Right ventricle myocardium inferior (tissue), 1 donor: ENCODE measurements at regions of chr10 and their contacts with region 1.

Region 1: GRCh38 chr10:117216611-117217195 is 19.4 kb downstream of the KCNK18 start:
- DNase-seq: peak; percentile 90
- ATAC-seq: peak; percentile 79

Region 2: GRCh38 chr10:117140525-117140902 is 76.2 kb before region 1 on chr10:
- intact Hi-C with region 1: no loop called
- DNase-seq: no peak
- ATAC-seq: no peak

Region 3: GRCh38 chr10:117318909-117319308 is 102.2 kb after region 1 on chr10:
- intact Hi-C with region 1: loop called (anchors 5 kb)
- DNase-seq: no peak
- ATAC-seq: no peak

Region 4: GRCh38 chr10:117375360-117376178 is 158.9 kb after region 1 on chr10 and contains the start of gene PDZD8:
- intact Hi-C with region 1: loop called (anchors 5 kb)
- DNase-seq: peak; percentile 98
- ATAC-seq: peak; percentile 98
- total RNA-seq, gene PDZD8: 20.0 TPM

Region 5: DNA sequence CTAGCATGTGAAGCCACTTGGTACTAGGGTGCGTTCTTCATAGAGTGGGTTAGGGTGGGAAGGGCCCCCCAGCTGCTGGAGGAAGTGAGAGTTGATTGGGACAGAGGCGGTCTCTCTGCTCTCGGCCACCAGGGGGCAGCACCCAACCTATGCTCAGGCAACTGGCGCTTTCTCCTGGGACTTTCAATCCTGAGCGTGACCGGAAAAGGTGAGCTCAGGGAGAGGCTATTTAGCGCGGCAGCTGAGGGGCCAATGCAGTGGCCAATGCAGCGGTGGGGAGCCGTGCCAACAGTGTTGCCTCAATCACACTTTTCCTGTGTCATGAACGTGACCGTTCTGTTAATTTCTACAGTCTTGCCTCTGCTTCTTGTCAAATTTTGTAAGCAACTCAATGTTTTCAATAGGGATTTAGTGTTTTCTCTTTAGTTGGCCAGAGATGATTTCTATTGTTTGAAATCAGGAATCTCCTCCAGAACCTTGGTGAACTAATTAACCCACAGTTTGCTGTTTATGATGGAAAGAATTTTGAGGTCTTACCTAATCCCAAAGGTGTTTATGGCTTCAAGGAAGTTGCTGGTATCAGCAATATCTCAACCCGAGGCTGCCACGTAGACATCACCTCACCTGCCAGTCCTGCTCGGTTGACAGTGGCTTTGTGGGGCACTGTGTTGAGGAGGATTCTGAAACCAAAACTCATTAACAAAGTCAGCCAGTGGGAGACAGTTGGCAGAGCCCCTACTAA is 226.4 kb after region 1 on chr10:
- intact Hi-C with region 1: loop called (anchors 10 kb)
- DNase-seq: peak; percentile 85
- ATAC-seq: peak; percentile 32

Region 6: DNA sequence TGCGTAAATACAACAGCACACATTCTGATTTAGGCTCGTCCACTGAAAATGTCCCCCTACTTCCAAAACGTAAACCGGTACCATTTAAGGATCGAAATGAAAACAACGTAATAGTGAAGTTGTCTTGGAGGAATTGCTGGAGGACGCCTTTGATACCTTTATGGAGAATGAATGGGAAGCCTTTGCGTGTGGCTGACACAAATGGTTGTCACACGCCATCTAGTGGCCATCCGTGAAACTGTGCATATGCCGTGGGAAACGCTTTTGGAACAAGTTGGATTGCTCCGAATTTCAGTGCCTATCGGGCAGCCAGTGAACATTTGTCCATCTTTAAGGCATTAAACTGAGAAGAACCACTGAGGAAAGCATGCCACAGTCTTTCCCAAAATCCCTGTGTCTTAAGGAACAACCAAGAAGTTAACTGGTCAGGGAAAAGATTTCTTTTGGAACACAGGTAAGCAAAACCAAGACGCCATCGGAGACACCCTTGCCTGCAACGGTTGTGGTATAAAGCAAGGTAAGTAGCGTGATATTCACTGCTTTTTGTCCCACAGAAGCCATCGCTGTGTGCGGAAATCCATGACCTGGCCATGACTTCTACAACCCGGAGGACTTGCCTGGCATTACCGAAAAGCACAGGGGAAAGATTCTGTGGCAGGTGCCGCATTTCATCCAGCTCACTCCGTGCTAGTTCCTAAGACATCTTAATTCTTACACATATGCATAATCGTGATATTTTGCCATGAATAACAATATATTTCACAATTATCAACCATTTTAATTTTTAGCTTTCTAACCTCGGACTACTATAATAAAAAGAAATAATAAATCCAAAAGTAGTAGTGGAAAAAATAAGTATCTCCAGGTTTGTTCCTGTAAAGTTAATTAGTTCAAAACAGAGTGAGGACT is 1024.8 kb after region 1 on chr10:
- intact Hi-C with region 1: loop called (anchors 10 kb)
- DNase-seq: peak; percentile 75
- ATAC-seq: peak; percentile 67

Region 7: DNA sequence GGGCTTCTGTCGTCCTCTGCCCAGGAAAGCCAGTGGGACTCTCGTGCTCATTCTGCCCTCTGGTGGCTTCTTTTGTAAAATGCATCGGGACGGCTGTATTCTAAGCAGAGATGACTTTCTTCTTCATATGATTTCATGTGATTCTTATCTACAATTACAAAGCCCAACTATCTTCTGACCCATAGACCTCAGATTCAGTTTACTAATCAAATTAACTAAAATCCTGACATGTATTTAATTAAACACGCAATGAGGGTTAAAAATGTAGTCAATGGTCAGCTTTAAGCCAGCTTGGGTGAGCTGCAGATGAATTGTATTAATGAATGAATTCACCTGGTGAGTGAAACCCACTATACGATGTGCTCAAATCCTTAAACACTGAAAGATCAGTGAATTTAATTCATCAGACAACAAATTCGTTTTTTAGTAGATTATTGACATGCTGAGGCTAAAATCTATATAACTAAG is 1243.1 kb after region 1 on chr10:
- intact Hi-C with region 1: loop called (anchors 10 kb)
- DNase-seq: no peak
- ATAC-seq: peak; percentile 80